Ascending aorta (tissue), 2 donors: ENCODE measurements at regions of chr9 and their contacts with region 1.

Region 1: GRCh38 chr9:23492126-23493002 is 333.7 kb downstream of the ELAVL2 start:
- DNase-seq: no peak
- H3K4me3 ChIP-seq: no peak overlapping the region
- H3K27ac ChIP-seq: no peak overlapping the region
- H3K4me1 ChIP-seq: no peaks in the 10 kb centered on the region
- H3K27me3 ChIP-seq: no peaks in the 10 kb centered on the region
- CTCF ChIP-seq: peak; percentile 9 to 52 (median 11)

Region 2: DNA sequence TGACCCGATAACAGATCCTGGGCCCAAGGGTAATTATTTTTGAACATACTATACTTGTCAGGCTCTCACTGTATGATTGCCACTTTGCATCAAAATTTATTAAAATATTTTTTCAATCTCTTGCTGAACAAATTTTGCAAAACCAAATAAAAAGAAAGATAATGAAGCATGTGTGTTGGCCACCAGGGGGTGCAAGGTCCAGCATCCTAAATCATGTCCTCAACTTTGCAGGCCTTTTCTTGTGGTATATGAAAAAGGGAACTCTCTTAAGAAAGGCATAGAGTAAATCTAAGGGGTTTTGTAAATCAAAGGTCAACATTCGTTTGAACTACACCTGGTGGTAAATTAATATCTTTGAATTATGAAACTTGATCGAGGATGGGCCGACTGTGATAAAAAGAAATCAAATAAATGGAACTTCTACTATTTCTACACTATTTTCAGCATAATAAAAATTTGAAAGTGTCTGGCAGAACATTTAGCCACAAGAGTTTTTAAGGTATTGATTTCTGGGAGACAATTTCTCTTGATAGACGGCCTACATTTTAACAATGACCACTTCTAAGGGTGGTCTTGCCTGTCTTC is 369.2 kb before region 1 on chr9:
- intact Hi-C with region 1: loop called (anchors 10 kb)
- DNase-seq: no peak
- H3K4me3 ChIP-seq: no peak overlapping the region
- H3K27ac ChIP-seq: no peak overlapping the region
- H3K4me1 ChIP-seq: no peaks in the 10 kb centered on the region
- H3K27me3 ChIP-seq: no peaks in the 10 kb centered on the region
- CTCF ChIP-seq: peak in 1 of 3 experiments; percentile 46

Region 3: DNA sequence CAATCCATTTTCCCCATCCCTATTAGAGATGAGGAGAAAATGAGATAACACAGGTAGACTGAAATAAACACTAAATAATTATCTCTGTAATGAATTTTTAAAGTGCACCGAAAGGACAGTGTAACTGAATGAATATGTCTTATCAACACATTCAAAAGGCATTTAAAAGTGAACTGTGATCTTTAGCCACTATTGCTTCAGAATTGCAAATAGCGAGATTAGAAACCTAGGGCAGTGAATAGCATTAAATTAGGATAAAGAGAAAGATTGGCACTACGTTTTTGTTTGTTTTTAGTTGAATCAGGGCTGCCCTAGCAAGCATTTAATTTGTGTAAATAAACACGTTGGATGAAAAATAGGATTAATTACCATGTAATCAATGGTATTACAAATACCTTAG is 203.8 kb before region 1 on chr9:
- intact Hi-C with region 1: no loop called
- DNase-seq: no peak
- H3K4me3 ChIP-seq: no peak overlapping the region
- H3K27ac ChIP-seq: no peak overlapping the region
- H3K4me1 ChIP-seq: no peaks in the 10 kb centered on the region
- H3K27me3 ChIP-seq: no peaks in the 10 kb centered on the region
- CTCF ChIP-seq: no peak

Region 4: GRCh38 chr9:23302281-23302680 is 190.1 kb before region 1 on chr9:
- intact Hi-C with region 1: no loop called
- DNase-seq: no peak
- H3K4me3 ChIP-seq: no peak overlapping the region
- H3K27ac ChIP-seq: no peak overlapping the region
- H3K4me1 ChIP-seq: no peaks in the 10 kb centered on the region
- H3K27me3 ChIP-seq: no peaks in the 10 kb centered on the region
- CTCF ChIP-seq: no peak

Region 5: GRCh38 chr9:24572406-24572805 is 1080.0 kb after region 1 on chr9:
- intact Hi-C with region 1: no loop called
- DNase-seq: no peak
- H3K4me3 ChIP-seq: no peak overlapping the region
- H3K27ac ChIP-seq: no peak overlapping the region
- H3K4me1 ChIP-seq: no peaks in the 10 kb centered on the region
- H3K27me3 ChIP-seq: no peaks in the 10 kb centered on the region
- CTCF ChIP-seq: no peak